Left cardiac atrium (tissue), 4 donors: ENCODE measurements at regions of chr3 and their contacts with region 1.

Region 1: GRCh38 chr3:140151321-140151720 is 216.3 kb downstream of the CLSTN2 start:
- DNase-seq: no peak
- ATAC-seq: no peak

Region 2: DNA sequence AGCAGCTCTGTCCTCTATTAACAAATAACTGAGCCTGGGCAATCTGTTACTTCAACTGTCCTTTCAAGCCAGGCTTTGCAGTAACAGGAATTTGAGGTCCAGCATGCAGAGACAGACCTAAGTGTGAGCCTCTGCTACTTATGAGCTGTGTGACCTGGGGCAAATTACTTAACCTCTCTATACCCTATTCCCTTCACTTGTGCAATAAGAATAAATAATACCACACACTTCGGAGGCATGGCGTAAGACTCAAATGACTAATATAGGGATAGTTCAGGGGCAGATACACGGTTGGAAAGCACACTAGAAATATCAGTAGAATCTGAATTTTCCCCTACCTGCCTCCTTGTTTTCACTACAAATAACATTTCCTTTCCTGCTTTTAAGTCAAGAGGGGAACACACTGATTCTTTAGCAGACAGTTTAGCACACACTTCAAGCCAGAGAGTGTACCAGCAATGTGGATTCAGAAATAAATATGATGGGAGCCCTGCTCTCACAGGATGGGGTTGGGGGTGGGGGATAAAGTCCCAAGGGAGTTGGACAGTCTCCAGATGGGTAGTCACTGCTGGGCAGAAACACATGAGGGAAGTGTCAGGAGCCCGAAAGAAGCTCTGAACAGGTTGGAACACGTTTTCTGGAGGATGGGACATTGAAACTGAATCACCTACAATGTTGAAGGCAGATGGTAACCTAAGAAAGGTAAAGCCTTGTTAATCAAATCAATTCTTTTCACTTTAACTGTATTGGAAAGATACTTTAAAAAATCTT is 549.9 kb before region 1 on chr3:
- intact Hi-C with region 1: no loop called
- DNase-seq: no peak
- ATAC-seq: peak; percentile 24 to 49

Region 3: GRCh38 chr3:140100479-140100878 is 50.8 kb before region 1 on chr3:
- intact Hi-C with region 1: loop called in 1 of 2 experiments (anchors 2 kb)
- DNase-seq: no peak
- ATAC-seq: no peak